B cell (primary cell): ENCODE measurements at regions of chr3 and their contacts with region 1.

Region 1: DNA sequence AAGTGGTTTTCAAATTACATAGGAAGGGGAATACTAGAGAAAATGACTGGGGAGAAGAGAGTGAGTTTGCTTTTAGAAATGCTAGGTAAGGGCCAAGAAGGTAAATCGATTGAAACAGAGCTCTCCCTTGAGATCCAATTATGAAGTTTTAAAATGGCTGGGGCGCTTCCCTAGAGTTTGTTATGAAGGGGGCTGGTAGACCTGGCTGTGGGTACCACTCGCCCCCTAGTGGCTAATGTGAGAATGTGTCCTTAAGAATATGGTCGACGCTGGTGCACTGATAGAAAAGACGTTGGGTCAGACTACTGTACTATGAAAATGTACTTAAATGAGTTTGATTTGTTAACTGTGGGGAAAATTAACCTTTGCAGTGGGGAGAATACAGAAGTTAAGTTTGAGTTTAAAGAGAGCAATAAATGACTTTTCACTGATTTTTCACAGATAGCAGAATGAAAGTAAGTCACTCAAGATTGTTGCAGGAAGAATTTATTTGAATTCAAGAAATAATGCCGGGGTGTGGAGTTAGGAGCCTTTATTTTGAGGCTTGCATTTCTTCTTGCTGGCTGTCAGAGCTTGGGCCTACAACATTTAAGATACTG is 9.2 kb downstream of the TMPRSS7 start:
- DNase-seq: peak; percentile 76
- ATAC-seq: peak; percentile 92
- H3K4me3 ChIP-seq: no peak overlapping the region
- H3K4me3 Mint-ChIP-seq: no peak overlapping the region
- H3K27ac ChIP-seq: no peak overlapping the region
- H3K27ac Mint-ChIP-seq: no peak overlapping the region
- H3K4me1 ChIP-seq: peaks cover 7 to 8% of the 10 kb centered on the region in 2 donors
- H3K4me1 Mint-ChIP-seq: peaks cover 4% of the 10 kb centered on the region
- H3K27me3 ChIP-seq: no peaks in the 10 kb centered on the region
- H3K27me3 Mint-ChIP-seq: peaks cover 9% of the 10 kb centered on the region
- CTCF ChIP-seq: peak; percentile 93

Region 2: GRCh38 chr3:111989061-111989678 is 54.5 kb before region 1 on chr3:
- CTCF ChIA-PET with region 1: interaction called, 31 read pairs
- POLR2A ChIA-PET with region 1: no interaction called
- intact Hi-C with region 1: loop called (anchors 1 kb)
- DNase-seq: peak; percentile 55
- ATAC-seq: peak; percentile 76
- H3K4me3 ChIP-seq: no peak overlapping the region
- H3K4me3 Mint-ChIP-seq: no peak overlapping the region
- H3K27ac ChIP-seq: no peak overlapping the region
- H3K27ac Mint-ChIP-seq: no peak overlapping the region
- H3K4me1 ChIP-seq: no peaks in the 10 kb centered on the region
- H3K4me1 Mint-ChIP-seq: peaks cover 12% of the 10 kb centered on the region
- H3K27me3 ChIP-seq: no peaks in the 10 kb centered on the region
- H3K27me3 Mint-ChIP-seq: no peaks in the 10 kb centered on the region
- CTCF ChIP-seq: peak; percentile 80

Region 3: GRCh38 chr3:112061152-112061551 is 17.4 kb after region 1 on chr3:
- CTCF ChIA-PET with region 1: no interaction called
- POLR2A ChIA-PET with region 1: no interaction called
- intact Hi-C with region 1: no loop called
- DNase-seq: no peak
- ATAC-seq: no peak
- H3K4me3 ChIP-seq: no peak overlapping the region
- H3K4me3 Mint-ChIP-seq: no peak overlapping the region
- H3K27ac ChIP-seq: no peak overlapping the region
- H3K27ac Mint-ChIP-seq: no peak overlapping the region
- H3K4me1 ChIP-seq: no peaks in the 10 kb centered on the region
- H3K4me1 Mint-ChIP-seq: no peaks in the 10 kb centered on the region
- H3K27me3 ChIP-seq: no peaks in the 10 kb centered on the region
- H3K27me3 Mint-ChIP-seq: peaks cover 3% of the 10 kb centered on the region
- CTCF ChIP-seq: no peak